ENCODE measurements at regions of chr3 and their contacts with region 1.

Region 1: GRCh38 chr3:190811775-190812480 is 50.6 kb downstream of the GMNC start:
- DNase-seq: peak; percentile 84
- H3K4me3 Mint-ChIP-seq: peak overlapping the region; percentile 64
- H3K27ac Mint-ChIP-seq: peak overlapping the region; percentile 36
- H3K4me1 Mint-ChIP-seq: peaks cover 12% of the 10 kb centered on the region
- H3K27me3 Mint-ChIP-seq: no peaks in the 10 kb centered on the region
- CTCF ChIP-seq: peak; percentile 76

Region 2: DNA sequence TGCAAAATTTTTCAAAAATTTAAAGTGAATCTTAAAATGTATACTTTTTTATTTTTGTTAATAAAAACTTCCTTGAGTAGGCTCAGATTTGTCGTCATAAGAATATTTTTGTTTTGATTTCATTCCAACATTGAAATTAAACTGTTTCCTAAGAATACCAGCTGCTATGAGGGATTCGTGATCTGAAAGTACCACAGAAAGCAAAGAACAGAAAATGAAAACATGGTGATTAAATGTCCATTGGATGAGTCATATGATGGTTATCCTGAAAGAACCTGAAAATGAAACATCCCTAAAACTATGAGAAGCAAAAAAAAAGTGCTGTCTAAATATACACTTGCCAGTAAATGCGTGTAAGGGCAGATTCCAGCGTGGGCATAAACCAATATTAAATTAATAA is 93.3 kb before region 1 on chr3:
- CTCF ChIA-PET with region 1: interaction called, 13 read pairs
- POLR2A ChIA-PET with region 1: interaction called, 4 read pairs
- intact Hi-C with region 1: no loop called
- DNase-seq: peak; percentile 48
- H3K4me3 Mint-ChIP-seq: peak overlapping the region; percentile 65
- H3K27ac Mint-ChIP-seq: peak overlapping the region; percentile 93
- H3K4me1 Mint-ChIP-seq: no peaks in the 10 kb centered on the region
- H3K27me3 Mint-ChIP-seq: no peaks in the 10 kb centered on the region
- CTCF ChIP-seq: no peak

Region 3: DNA sequence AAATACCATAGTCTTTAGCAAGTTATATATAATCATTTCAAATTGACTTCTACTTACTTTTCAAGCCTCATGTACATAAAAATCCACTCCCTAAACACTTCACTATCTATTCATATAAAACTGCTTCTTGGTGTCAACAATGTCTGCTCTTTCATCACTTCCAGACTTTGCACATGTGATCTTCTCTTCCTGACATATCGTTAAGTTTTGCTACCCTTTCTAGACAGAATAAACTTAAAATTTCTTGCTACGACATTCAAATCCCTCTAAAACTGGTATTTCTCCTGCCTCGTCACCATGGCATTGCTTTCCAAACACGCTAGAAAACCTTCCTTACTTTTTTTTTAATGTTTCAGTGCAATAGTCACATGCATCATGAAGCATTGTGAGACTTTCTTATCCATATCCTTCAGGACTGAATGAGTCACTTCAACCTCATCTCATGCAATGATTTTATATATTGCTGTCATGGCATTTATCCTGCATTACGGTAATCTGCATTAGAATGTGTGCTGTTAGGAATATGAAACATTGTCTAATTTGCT is 72.2 kb before region 1 on chr3:
- CTCF ChIA-PET with region 1: no interaction called
- POLR2A ChIA-PET with region 1: no interaction called
- intact Hi-C with region 1: no loop called
- DNase-seq: no peak
- H3K4me3 Mint-ChIP-seq: no peak overlapping the region
- H3K27ac Mint-ChIP-seq: no peak overlapping the region
- H3K4me1 Mint-ChIP-seq: no peaks in the 10 kb centered on the region
- H3K27me3 Mint-ChIP-seq: no peaks in the 10 kb centered on the region
- CTCF ChIP-seq: no peak

Region 4: DNA sequence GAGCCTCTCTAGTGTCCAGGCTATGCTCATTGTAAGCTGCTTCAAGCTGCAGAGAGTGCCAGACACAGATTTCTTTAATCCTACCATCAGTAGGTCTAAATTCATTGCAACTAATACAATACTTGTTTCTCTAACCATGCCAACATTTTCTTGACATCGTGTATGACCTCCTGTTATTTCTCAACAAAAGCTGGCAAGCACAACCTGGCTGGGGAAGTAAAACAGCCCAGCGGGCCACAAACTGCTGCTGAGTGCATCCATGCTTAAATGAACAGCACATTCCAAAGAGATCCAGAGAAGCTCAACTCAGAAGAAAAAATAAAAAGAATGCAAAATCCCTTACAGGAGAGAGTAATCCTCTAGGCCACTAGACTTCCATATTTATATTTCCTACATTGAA is 14.1 kb after region 1 on chr3:
- CTCF ChIA-PET with region 1: interaction called, 10 read pairs
- POLR2A ChIA-PET with region 1: interaction called, 3 read pairs
- intact Hi-C with region 1: no loop called
- DNase-seq: peak; percentile 68
- H3K4me3 Mint-ChIP-seq: no peak overlapping the region
- H3K27ac Mint-ChIP-seq: no peak overlapping the region
- H3K4me1 Mint-ChIP-seq: peaks cover 21% of the 10 kb centered on the region
- H3K27me3 Mint-ChIP-seq: no peaks in the 10 kb centered on the region
- CTCF ChIP-seq: no peak

Region 5: GRCh38 chr3:190862209-190863118 is 50.5 kb after region 1 on chr3 and contains the start of gene GMNC:
- CTCF ChIA-PET with region 1: interaction called, 13 read pairs
- POLR2A ChIA-PET with region 1: interaction called, 4 read pairs
- intact Hi-C with region 1: loop called (anchors 2 kb)
- DNase-seq: peak; percentile 82
- H3K4me3 Mint-ChIP-seq: peak within 1 kb of the TSS; percentile 71
- H3K27ac Mint-ChIP-seq: peak within 1 kb of the TSS; percentile 43
- H3K4me1 Mint-ChIP-seq: peaks cover 12% of the 10 kb centered on the region
- H3K27me3 Mint-ChIP-seq: no peaks in the 10 kb centered on the region
- CTCF ChIP-seq: no peak
- total RNA-seq, gene GMNC: not detected in 2 replicates

Region 6: DNA sequence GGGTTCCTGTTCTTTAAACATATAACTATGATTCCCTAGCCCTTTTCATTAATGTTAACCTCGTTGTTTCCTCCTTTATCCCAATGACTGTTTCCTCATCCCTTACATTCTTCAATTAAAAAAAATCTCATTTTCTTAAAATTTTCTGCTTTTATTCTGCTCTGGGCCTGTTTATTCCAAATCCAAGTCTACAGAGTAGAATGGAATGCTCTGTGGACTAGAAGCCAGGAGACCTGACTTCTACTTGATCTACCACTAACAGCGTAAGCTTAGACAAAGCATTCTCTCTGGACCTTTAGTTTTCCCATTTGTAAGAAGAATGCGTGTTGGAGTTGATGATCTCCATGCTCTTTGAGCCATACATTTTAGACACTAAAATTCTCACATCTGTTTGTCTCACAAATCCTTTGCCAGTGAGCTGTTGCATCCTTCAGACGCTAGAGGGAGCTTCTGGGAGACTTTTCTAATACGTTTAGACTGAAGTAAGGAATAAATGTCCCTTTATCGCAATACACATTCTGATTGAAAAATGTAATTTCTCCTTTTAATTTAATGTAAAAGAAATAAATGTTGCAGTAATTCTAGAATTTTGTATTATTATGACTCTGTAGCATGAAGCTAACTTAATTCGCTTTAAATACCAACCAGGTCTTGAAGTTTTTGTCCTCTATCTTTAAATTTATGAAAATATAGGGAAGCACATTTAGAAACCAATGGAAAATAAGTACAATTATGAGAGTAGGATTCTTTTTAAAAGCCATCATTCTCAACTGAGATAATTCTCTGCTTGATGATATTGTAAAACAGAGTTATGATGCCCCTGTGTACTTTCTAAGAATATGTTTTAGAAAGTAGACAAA is 72.3 kb after region 1 on chr3:
- CTCF ChIA-PET with region 1: interaction called, 30 read pairs
- POLR2A ChIA-PET with region 1: no interaction called
- intact Hi-C with region 1: loop called (anchors 1 kb)
- DNase-seq: peak; percentile 80
- H3K4me3 Mint-ChIP-seq: no peak overlapping the region
- H3K27ac Mint-ChIP-seq: no peak overlapping the region
- H3K4me1 Mint-ChIP-seq: peaks cover 18% of the 10 kb centered on the region
- H3K27me3 Mint-ChIP-seq: no peaks in the 10 kb centered on the region
- CTCF ChIP-seq: peak; percentile 82

Region 7: DNA sequence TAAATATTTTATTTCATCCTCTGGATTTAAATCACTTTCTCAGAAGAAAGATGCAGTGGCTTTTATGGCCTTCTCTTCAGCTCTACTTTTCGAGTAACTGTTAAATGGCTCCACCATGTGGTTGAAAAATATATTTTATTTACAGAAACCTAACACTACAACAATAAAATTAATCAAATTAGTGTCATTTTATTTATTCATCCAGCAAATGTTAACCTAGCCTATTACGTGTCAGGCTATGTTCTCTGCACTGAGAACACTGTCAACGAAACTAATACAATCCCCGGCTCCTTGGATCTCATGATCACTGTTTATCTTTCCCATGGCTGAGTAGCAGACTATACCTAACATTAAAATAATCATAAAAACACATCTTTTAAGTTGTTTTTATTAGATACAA is 239.1 kb after region 1 on chr3:
- CTCF ChIA-PET with region 1: interaction called, 45 read pairs
- POLR2A ChIA-PET with region 1: interaction called, 7 read pairs
- intact Hi-C with region 1: loop called (anchors 1 kb)
- DNase-seq: peak; percentile 41
- H3K4me3 Mint-ChIP-seq: no peak overlapping the region
- H3K27ac Mint-ChIP-seq: no peak overlapping the region
- H3K4me1 Mint-ChIP-seq: no peaks in the 10 kb centered on the region
- H3K27me3 Mint-ChIP-seq: no peaks in the 10 kb centered on the region
- CTCF ChIP-seq: peak; percentile 38

Measured in MCF 10A (cell line).